ENCODE measurements at regions of chr15 and their contacts with region 1.

Region 1: GRCh38 chr15:66700802-66701421 is 1.1 kb upstream of the SMAD6 start:
- DNase-seq: peak; percentile 96 to 97 (median 96)
- ATAC-seq: peak; percentile 74 to 84 (median 82)
- H3K4me3 ChIP-seq: peak overlapping the region; percentile 67 to 73 (median 68)
- H3K27ac ChIP-seq: peak overlapping the region; percentile 68 to 85 (median 80)
- H3K4me1 ChIP-seq: peaks cover 0 to 14% (median 0%) of the 10 kb centered on the region in 3 donors
- H3K27me3 ChIP-seq: no peaks in the 10 kb centered on the region
- CTCF ChIP-seq: no peak

Region 2: DNA sequence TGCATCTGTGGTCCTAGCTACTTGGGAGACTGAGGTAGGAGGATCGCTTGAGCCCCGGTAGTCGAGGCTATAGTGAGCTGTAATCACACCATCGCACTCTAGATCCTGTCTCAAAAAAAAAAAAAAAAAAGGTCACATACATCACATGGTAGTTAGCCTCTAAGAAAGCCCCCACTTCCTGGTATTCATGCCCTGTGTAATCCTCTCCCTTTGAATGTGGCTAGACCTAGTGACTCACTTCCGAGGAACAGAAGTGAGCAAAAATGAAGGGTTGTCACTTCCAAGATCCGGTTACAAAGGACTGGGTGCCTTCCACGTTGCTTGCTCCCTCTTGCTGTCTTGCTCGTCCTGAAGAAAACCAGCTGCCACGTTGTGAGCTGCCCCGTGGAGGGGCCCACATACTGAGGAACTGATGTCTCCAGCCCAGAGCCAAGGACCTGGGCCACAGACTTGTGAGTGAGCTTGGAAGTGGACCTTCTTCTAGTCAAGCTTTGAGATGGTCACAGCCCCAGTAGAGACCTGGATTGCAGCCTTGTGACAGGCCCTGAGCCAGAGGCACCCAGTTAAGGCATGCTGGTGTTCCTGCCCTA is 122.5 kb before region 1 on chr15:
- intact Hi-C with region 1: no loop called
- DNase-seq: no peak
- ATAC-seq: no peak
- H3K4me3 ChIP-seq: no peak overlapping the region
- H3K27ac ChIP-seq: no peak overlapping the region
- H3K4me1 ChIP-seq: no peaks in the 10 kb centered on the region
- H3K27me3 ChIP-seq: no peaks in the 10 kb centered on the region
- CTCF ChIP-seq: no peak

Region 3: GRCh38 chr15:66611257-66612053 is 89.5 kb before region 1 on chr15:
- intact Hi-C with region 1: loop called in 1 of 3 experiments (anchors 5 kb)
- DNase-seq: peak; percentile 71 to 91 (median 86)
- ATAC-seq: peak; percentile 93 to 99 (median 97)
- H3K4me3 ChIP-seq: no peak overlapping the region
- H3K27ac ChIP-seq: peak overlapping the region; percentile 48 to 63 (median 56)
- H3K4me1 ChIP-seq: peaks cover 0 to 5% (median 0%) of the 10 kb centered on the region in 3 donors
- H3K27me3 ChIP-seq: no peaks in the 10 kb centered on the region
- CTCF ChIP-seq: no peak

Region 4: DNA sequence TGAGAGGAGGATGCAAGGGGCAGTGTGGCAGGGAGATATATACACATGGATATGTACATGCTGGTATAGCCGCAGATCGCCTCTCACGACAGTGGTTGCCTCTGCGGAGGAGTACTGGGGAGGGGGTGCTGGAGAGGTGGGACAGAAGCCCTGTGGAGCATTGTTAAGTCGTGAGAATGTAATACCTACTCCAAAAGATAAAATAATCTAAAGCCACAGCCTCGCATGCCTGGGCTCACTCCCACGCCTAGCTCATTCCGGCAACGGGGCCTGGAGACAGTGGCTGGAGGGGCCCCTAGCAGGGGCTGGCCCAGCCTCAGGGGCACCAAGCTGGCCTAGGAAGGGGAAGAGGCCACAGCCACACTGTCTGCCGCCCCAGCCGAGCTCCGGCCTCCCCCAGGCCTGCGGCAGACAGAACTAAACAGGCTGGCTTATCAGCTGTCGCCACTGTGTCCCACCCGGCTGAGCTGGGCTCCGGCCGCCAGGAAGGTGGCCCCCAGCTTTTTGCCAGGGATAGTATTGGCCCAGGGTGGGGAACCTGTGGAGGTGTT is 70.0 kb before region 1 on chr15:
- intact Hi-C with region 1: loop called in 1 of 3 experiments (anchors 10 kb)
- DNase-seq: no peak
- ATAC-seq: no peak
- H3K4me3 ChIP-seq: no peak overlapping the region
- H3K27ac ChIP-seq: no peak overlapping the region
- H3K4me1 ChIP-seq: no peaks in the 10 kb centered on the region
- H3K27me3 ChIP-seq: no peaks in the 10 kb centered on the region
- CTCF ChIP-seq: no peak

Region 5: GRCh38 chr15:66765478-66766281 is 64.8 kb after region 1 on chr15:
- intact Hi-C with region 1: loop called in 2 of 3 experiments (anchors 5 kb)
- DNase-seq: peak; percentile 86 to 92 (median 88)
- ATAC-seq: peak; percentile 71 to 83 (median 80)
- H3K4me3 ChIP-seq: no peak overlapping the region
- H3K27ac ChIP-seq: peak overlapping the region; percentile 48 to 80 (median 72)
- H3K4me1 ChIP-seq: peaks cover 35 to 61% (median 55%) of the 10 kb centered on the region in 3 donors
- H3K27me3 ChIP-seq: no peaks in the 10 kb centered on the region
- CTCF ChIP-seq: no peak

Region 6: DNA sequence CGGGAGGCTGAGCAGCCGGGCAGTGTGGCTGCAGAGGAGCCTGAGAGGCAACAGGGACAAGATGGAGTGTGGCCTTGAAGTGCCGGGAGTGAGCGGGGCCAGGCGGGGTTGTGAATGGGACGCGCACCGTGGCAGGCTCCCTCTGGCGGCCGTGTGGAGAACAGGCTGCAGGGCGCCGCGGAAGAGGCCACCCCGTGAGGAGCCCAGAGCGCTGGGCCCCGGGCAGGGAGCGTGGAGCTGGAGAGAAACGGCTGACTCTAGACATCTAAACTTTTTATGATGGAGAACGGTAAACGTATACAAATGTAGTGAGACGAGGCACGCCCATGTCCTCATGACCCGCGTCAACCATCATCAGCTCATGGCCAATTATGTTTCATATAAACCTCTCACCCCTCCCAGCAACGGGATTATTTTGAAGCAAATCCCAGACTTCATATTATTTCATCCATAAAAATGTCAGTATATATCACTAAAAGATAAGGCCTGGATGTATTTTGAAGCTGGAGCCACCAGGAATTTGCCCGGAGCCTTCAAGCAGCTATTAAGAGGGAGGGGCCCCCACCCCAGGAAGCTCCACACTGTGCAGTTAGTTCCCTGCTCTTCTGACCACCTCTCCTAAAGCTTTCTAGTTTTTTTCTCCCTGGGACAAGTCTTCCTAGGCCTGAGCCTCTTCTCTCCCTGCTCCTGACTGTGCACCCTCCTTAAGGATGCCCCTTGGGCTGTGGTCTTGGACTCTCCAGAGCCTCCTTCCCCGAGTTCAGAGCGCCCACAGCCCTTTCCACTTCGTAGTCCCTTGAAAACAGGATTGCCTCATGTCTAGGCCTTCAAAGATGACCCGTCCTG is 150.5 kb after region 1 on chr15:
- intact Hi-C with region 1: loop called in 1 of 3 experiments (anchors 10 kb)
- DNase-seq: peak; percentile 71 to 92 (median 84)
- ATAC-seq: peak; percentile 93 to 98 (median 96)
- H3K4me3 ChIP-seq: no peak overlapping the region
- H3K27ac ChIP-seq: no peak overlapping the region
- H3K4me1 ChIP-seq: no peaks in the 10 kb centered on the region
- H3K27me3 ChIP-seq: no peaks in the 10 kb centered on the region
- CTCF ChIP-seq: peak; percentile 97 to 98 (median 97)

Measured in pancreas (tissue), 10 donors.